HepG2 (cell line): ENCODE measurements at regions of chr11 and their contacts with region 1.

Region 1: DNA sequence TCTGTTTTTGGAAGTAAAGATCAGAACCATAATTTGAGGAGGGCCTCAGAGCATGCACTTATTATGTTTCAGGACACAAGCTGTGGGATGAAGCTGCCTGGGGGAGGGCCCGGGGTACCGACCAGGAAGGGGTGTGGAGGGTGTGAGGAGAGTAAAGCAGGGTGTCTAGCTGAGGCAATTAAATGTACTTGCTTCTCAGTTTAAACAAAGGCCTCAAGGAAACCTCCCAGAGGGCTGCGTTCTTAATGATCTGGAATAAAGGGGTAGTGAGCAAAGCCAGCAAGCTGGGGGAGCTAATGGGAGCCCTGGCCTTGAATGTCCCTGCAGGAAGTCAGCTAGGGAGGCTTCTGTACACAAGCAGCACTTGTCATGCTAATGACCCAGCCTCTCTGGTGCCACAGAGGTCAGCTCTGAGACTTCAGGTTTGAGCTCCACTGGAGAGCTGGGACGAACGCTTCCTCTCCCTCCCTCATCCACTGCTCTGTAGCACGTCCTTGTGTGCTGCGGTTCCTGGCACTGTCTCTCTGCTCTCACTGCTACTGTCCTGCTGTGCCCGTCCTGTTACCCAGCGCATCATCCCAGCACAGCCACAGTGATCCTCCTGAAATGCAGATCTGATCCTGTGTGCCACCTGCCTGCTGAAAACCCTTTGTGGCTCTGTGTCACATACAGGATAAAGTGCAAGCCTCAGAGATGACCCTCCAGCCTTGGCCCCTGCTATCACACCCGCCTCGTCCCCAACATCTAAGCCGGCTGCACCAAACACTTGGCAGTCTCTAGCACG is 159.7 kb downstream of the DBX1 start:
- DNase-seq: peak; percentile 88
- ATAC-seq: peak; percentile 74
- H3K4me3 ChIP-seq: peak overlapping the region; percentile 18 to 65 (median 28); a peak in 5 of 6 replicates
- H3K27ac ChIP-seq: peak overlapping the region; percentile 86
- H3K4me1 ChIP-seq: peaks cover 75% of the 10 kb centered on the region
- H3K27me3 ChIP-seq: no peaks in the 10 kb centered on the region
- CTCF ChIP-seq: peak; percentile 28; the same call in 1 of the 2 replicates
- EP300 ChIP-seq: peak in 1 of 2 experiments; percentile 68; a peak in 2 of 4 replicates
- POLR2A ChIP-seq: peak; percentile 38 to 55; a peak in 2 of 4 replicates
- RAD21 ChIP-seq: peak; percentile 22; the same call in 1 of the 2 replicates

Region 2: GRCh38 chr11:19892876-19893275 is 107.7 kb before region 1 on chr11:
- CTCF ChIA-PET with region 1: no interaction called
- POLR2A ChIA-PET with region 1: no interaction called
- in situ Hi-C with region 1: no loop called
- intact Hi-C with region 1: no loop called
- DNase-seq: no peak
- ATAC-seq: no peak
- H3K4me3 ChIP-seq: no peak overlapping the region
- H3K27ac ChIP-seq: no peak overlapping the region
- H3K4me1 ChIP-seq: no peaks in the 10 kb centered on the region
- H3K27me3 ChIP-seq: peaks cover 0 to 23% of the 10 kb centered on the region in 2 experiments; a peak in 4 of 5 replicates
- CTCF ChIP-seq: no peak
- EP300 ChIP-seq: no peak
- POLR2A ChIP-seq: no peak
- RAD21 ChIP-seq: no peak

Region 3: GRCh38 chr11:20013346-20014066 is 13.0 kb after region 1 on chr11:
- CTCF ChIA-PET with region 1: no interaction called
- POLR2A ChIA-PET with region 1: interaction called, 29 read pairs
- in situ Hi-C with region 1: no loop called
- intact Hi-C with region 1: no loop called
- DNase-seq: peak; percentile 73
- ATAC-seq: peak; percentile 80
- H3K4me3 ChIP-seq: peak overlapping the region in 1 of 3 experiments; percentile 27; a peak in 3 of 6 replicates
- H3K27ac ChIP-seq: peak overlapping the region; percentile 68
- H3K4me1 ChIP-seq: peaks cover 93% of the 10 kb centered on the region
- H3K27me3 ChIP-seq: no peaks in the 10 kb centered on the region
- CTCF ChIP-seq: no peak
- EP300 ChIP-seq: peak in 1 of 2 experiments; percentile 49; a peak in 1 of 4 replicates
- POLR2A ChIP-seq: no peak
- RAD21 ChIP-seq: no peak